ENCODE measurements at regions of chr3 and their contacts with region 1.

Region 1: DNA sequence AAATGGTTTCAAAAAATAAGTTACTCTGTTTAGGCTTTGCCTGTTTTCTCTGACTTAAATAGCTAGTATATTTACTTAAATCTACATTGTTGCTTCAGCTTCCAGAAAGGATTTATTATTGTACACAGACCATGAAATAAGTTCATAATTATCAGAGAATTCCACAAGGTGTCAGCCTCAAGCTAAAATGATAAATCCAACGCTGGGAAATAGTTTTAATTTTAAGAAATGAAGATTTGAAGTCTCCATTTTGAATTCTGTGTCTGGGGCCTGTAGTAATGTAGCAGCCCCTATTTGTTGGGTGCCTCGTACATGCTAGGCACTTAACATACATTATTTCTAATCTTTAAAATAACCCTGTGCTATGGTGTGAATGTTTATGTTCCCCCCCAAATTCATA is 92.6 kb upstream of the KCNMB2 start:
- DNase-seq: no peak
- H3K4me3 ChIP-seq: no peak overlapping the region
- H3K27ac ChIP-seq: no peak overlapping the region
- H3K4me1 ChIP-seq: no peaks in the 10 kb centered on the region
- H3K27me3 ChIP-seq: no peaks in the 10 kb centered on the region
- CTCF ChIP-seq: no peak
- EP300 ChIP-seq: no peak
- POLR2A ChIP-seq: no peak

Region 2: DNA sequence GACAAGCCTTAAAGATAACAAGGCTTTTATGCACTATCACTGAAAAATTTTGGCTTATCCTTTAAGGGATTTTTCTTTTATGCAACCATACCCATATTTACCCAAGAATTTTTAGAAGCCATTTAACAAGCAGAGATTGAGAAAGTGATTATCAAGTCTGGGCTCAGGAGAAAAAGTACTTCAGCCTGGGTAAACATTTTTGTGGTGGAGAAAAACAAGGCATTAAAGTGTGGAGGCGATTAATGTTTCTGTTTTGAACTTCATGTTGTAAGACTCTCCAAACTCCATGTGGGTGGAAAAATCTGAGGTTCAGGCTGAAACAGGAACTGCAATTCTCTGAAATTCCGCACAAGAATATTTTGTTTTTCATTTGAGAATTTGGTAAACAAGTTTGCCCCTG is 167.8 kb before region 1 on chr3:
- in situ Hi-C with region 1: no loop called
- intact Hi-C with region 1: no loop called
- DNase-seq: no peak
- H3K4me3 ChIP-seq: no peak overlapping the region
- H3K27ac ChIP-seq: no peak overlapping the region
- H3K4me1 ChIP-seq: peaks cover 0 to 12% (median 0%) of the 10 kb centered on the region in 4 donors
- H3K27me3 ChIP-seq: no peaks in the 10 kb centered on the region
- CTCF ChIP-seq: no peak
- EP300 ChIP-seq: no peak
- POLR2A ChIP-seq: no peak

Region 3: DNA sequence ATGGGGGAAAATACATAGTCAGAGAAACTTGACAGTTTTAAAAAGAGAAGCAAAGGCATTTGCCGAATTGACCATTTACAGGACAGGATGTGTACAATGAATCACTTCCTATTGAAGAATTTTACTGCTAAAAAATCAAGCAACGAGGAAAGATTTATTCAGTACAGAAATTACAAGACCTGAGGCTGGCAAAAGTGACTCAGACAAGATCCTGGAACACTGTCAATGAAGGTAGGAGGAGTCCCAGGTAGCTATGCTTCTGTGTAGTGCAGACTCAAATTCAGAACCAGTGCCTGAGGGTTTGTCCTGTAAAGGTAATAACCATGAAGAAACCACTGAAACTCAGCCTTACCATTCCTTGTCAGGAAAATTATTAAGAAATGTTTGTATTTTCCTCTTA is 507.0 kb after region 1 on chr3:
- in situ Hi-C with region 1: loop called (anchors 10 to 25 kb)
- intact Hi-C with region 1: no loop called
- DNase-seq: no peak
- H3K4me3 ChIP-seq: no peak overlapping the region
- H3K27ac ChIP-seq: no peak overlapping the region
- H3K4me1 ChIP-seq: no peaks in the 10 kb centered on the region
- H3K27me3 ChIP-seq: no peaks in the 10 kb centered on the region
- CTCF ChIP-seq: no peak
- EP300 ChIP-seq: no peak
- POLR2A ChIP-seq: no peak